ENCODE measurements at regions of chr16 and their contacts with region 1.

Region 1: GRCh38 chr16:27179500-27180072 is 23.7 kb upstream of the KDM8 start:
- DNase-seq: peak; percentile 98
- H3K4me3 Mint-ChIP-seq: no peak overlapping the region
- H3K27ac Mint-ChIP-seq: peak overlapping the region; percentile 67
- H3K4me1 Mint-ChIP-seq: peaks cover 48% of the 10 kb centered on the region
- H3K27me3 Mint-ChIP-seq: no peaks in the 10 kb centered on the region

Region 2: DNA sequence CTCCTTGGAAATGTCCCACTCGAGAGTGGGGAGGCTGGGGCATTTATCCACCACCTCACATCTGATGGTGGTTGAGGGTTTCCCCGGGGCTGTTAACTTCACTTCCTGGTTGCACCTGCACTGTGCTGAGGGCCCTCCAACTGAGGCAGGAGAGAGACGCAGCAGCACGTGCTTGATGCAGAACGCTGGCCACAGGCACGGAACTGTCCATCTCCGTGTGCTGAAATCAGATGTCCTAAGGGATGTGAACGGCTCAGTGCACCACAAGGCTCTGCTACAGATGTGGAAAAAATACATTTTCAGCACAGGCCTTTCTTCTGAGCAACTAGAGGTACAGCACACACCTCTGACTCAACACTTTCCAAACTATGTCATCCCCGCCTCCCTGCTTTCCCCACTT is 227.6 kb before region 1 on chr16:
- CTCF ChIA-PET with region 1: no interaction called
- intact Hi-C with region 1: no loop called
- DNase-seq: no peak
- H3K4me3 Mint-ChIP-seq: no peak overlapping the region
- H3K27ac Mint-ChIP-seq: no peak overlapping the region
- H3K4me1 Mint-ChIP-seq: no peaks in the 10 kb centered on the region
- H3K27me3 Mint-ChIP-seq: peaks cover 4% of the 10 kb centered on the region

Region 3: DNA sequence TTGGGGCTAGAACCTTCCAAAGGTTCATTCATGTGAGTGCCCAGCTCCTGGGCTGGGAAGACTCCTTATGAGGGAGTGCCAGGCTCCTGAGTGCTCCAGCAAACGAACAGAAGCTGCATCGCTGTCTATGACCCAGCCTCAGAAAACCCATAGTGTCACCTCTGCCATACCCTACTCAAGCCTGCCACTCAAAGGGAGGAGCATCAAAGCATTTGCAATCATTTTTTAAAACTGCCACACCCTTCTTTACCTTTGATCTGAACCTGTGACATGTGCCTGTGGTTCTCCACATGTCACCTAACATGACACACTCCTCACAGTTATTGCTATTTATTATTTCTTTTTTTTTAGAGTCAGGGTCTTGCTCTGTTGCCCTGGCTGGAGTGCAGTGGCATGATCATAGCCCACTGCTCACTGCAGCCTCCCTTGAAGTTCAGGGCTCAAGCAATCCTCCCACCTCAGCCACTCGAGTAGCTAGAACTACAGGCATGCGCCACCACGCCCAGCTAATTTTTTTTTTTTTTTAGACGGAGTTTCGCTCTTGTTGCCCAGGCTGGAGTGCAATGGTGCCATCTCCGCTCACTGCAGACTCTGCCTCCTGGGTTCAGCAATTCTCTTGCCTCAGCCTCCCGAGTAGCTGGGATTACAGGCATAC is 16.5 kb after region 1 on chr16:
- CTCF ChIA-PET with region 1: interaction called, 22 read pairs
- intact Hi-C with region 1: loop called (anchors 1 kb)
- DNase-seq: peak; percentile 39
- H3K4me3 Mint-ChIP-seq: no peak overlapping the region
- H3K27ac Mint-ChIP-seq: peak overlapping the region; percentile 43
- H3K4me1 Mint-ChIP-seq: peaks cover 51% of the 10 kb centered on the region
- H3K27me3 Mint-ChIP-seq: no peaks in the 10 kb centered on the region

Region 4: DNA sequence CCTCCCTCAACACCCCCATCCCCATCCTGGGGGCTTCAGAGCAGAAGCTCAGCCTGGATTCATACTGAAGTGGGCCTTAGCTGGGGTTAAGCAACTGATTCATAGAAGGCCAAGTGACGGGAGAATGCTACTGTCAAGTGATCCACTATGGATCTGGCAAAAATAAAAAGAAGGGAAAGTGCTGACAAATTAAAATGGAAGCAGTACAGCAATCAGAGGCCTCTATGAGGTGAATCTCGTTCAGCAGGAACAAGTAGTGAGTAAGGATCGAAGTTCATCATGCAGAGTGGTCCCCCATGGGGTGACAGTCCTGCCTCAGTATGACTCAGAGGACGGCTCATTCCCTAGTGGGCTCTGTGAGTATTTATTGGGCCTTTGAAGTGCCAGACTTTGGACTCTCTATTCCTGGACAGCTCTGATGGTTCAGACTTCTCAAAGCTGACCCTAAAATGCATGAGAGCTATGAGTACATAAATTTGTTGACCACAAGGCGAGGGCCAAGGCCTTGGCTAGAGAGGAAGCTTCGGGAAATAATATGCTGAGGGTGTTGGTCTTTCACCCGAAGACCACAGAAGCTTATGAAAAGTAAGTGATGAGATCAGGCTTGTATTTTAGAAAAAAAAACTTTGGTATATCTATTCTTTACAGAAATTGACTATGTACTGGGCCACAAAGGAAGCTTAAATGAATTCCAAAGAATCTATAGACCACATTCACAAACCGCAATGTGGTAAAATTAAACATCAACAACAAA is 94.3 kb after region 1 on chr16:
- CTCF ChIA-PET with region 1: interaction called, 5 read pairs
- intact Hi-C with region 1: loop called (anchors 5 kb)
- DNase-seq: peak; percentile 54
- H3K4me3 Mint-ChIP-seq: peak overlapping the region; percentile 7
- H3K27ac Mint-ChIP-seq: peak overlapping the region; percentile 72
- H3K4me1 Mint-ChIP-seq: peaks cover 65% of the 10 kb centered on the region
- H3K27me3 Mint-ChIP-seq: no peaks in the 10 kb centered on the region

Region 5: GRCh38 chr16:27401768-27402568 is 222.4 kb after region 1 on chr16 and contains the start of gene IL21R:
- CTCF ChIA-PET with region 1: interaction called, 3 read pairs
- intact Hi-C with region 1: loop called (anchors 1 kb)
- DNase-seq: peak; percentile 93
- H3K4me3 Mint-ChIP-seq: peak within 1 kb of the TSS; percentile 98
- H3K27ac Mint-ChIP-seq: peak within 1 kb of the TSS; percentile 100
- H3K4me1 Mint-ChIP-seq: peaks cover 43% of the 10 kb centered on the region
- H3K27me3 Mint-ChIP-seq: no peaks in the 10 kb centered on the region
- total RNA-seq, gene IL21R: 93.8 to 99.2 TPM